ENCODE measurements at regions of chr3 and their contacts with region 1.

Region 1: DNA sequence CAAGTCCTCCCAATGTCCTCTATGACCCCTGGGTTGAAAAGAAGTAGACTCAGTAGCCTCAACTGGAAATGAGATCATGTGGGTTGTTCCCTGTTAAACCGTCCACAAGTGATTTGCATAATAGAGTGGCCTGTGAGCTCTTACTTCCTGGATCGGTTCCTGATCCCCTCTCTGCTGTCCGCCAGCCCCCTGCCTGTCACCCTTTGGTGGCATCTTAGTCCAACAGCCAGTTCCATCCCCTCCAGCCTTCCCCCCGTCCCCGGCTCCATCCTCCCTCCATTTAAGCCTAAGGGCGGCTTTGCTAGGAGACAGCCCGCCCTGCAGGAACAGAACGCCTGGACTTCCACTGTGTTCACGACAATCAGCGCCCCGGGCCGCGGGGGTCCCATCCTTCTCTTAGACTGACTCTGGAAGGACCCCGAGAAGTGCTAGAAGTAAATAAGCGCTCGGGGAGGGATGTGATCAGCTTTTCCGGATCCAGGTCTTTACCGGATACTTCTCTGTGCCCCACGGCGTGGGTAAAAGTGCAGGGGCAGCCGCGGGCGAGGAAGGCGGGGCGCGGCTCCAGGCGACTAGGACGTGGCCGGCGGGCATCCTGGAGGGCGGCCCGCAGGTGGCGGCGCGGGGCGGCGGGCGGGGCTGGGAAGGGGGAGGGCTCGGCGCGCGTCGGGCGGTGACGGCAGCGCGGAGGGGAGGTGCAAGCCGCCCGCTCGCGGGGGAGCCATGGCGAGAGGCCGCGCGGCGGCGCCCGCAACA is 51.2 kb upstream of the ULK4 start:
- DNase-seq: peak; percentile 75
- H3K4me3 Mint-ChIP-seq: peak overlapping the region; percentile 77
- H3K27ac Mint-ChIP-seq: peak overlapping the region; percentile 30
- H3K4me1 Mint-ChIP-seq: peaks cover 38% of the 10 kb centered on the region
- H3K27me3 Mint-ChIP-seq: no peaks in the 10 kb centered on the region
- CTCF ChIP-seq: no peak

Region 2: GRCh38 chr3:41893977-41894376 is 119.1 kb before region 1 on chr3:
- CTCF ChIA-PET with region 1: no interaction called
- intact Hi-C with region 1: loop called (anchors 10 kb)
- DNase-seq: peak; percentile 45
- H3K4me3 Mint-ChIP-seq: no peak overlapping the region
- H3K27ac Mint-ChIP-seq: no peak overlapping the region
- H3K4me1 Mint-ChIP-seq: no peaks in the 10 kb centered on the region
- H3K27me3 Mint-ChIP-seq: no peaks in the 10 kb centered on the region
- CTCF ChIP-seq: no peak

Region 3: DNA sequence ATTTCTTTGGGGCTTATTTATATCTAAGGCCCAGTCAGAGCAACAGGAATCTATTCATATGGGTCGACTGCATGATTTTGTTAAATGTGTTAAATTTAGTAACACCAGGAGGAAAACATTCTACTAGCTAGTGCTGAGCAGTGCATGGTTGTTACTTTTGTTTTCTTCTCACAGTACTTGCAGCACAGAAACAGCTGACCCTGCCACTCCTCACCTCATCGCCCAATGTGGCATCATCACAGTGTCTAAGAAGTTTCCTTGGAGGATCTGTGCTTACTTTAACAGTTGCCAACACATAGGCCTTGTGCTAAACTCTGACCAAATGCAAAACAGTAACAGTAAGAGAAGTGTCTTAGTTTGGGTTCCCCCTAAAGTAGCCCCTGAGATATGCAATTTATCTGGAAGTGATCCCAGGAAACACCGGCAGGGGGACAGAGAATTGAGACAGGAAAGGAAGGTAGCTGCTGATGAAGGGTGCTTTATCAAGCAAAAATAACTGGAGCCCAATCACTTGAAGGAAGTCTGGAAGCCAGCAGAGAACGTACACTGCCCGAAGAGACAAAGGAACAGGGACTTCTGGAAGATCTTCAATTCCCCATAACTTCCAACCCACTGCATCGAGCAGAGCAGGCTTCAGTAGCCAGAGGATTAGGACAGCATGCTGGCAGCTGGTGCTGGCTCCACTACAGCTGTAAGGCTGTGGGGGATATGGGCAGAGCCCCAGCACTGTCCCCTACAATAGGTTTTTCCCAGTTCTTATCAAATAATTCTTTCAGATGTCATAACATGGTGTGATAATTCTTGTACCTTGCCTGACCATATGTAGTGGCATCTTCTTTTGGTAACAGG is 15.2 kb before region 1 on chr3:
- CTCF ChIA-PET with region 1: no interaction called
- intact Hi-C with region 1: no loop called
- DNase-seq: peak; percentile 17
- H3K4me3 Mint-ChIP-seq: no peak overlapping the region
- H3K27ac Mint-ChIP-seq: no peak overlapping the region
- H3K4me1 Mint-ChIP-seq: no peaks in the 10 kb centered on the region
- H3K27me3 Mint-ChIP-seq: no peaks in the 10 kb centered on the region
- CTCF ChIP-seq: peak; percentile 19

Region 4: DNA sequence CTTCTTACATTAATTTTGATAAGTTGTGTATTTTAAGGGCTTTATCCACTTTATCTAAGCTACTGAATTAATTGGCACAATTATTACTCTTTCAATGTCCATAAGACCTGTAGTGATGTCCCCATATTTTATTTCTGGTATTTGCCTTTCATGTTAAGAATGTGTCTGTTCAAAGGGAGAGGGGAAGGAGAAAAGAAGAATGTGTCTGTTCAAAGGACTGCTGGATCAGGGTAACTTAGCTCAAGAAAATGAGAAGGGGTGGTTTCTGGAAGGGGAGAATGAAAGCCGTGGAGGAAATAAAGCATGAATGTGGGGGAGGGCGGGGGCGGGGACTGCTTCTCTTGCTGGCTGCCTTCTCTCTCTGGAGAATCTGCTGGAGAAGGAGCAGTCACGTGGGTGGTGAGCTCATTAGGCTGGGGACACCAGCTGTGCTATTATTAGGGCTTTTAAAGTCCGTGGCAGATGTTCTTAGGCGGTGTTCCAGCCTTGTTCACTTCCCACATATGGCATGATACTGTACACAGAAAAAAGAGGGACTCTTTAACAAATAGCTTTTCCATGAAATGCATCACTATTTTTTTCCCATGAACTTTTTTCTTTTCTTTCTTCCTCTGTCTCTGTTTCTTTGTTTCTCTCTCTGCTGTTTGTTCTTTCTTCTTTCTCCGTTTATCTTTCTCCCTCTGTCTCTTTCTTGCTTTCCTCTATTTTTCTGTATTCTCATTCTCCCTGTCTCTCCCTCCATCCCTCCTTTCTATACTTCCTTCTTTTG is 12.4 kb after region 1 on chr3:
- CTCF ChIA-PET with region 1: interaction called, 15 read pairs
- intact Hi-C with region 1: no loop called
- DNase-seq: peak; percentile 72
- H3K4me3 Mint-ChIP-seq: peak overlapping the region; percentile 63
- H3K27ac Mint-ChIP-seq: peak overlapping the region; percentile 72
- H3K4me1 Mint-ChIP-seq: peaks cover 42% of the 10 kb centered on the region
- H3K27me3 Mint-ChIP-seq: no peaks in the 10 kb centered on the region
- CTCF ChIP-seq: no peak

Region 5: GRCh38 chr3:42080452-42080891 is 67.4 kb after region 1 on chr3:
- CTCF ChIA-PET with region 1: no interaction called
- intact Hi-C with region 1: loop called (anchors 5 kb)
- DNase-seq: peak; percentile 64
- H3K4me3 Mint-ChIP-seq: peak overlapping the region; percentile 67
- H3K27ac Mint-ChIP-seq: peak overlapping the region; percentile 82
- H3K4me1 Mint-ChIP-seq: peaks cover 50% of the 10 kb centered on the region
- H3K27me3 Mint-ChIP-seq: no peaks in the 10 kb centered on the region
- CTCF ChIP-seq: no peak

Region 6: DNA sequence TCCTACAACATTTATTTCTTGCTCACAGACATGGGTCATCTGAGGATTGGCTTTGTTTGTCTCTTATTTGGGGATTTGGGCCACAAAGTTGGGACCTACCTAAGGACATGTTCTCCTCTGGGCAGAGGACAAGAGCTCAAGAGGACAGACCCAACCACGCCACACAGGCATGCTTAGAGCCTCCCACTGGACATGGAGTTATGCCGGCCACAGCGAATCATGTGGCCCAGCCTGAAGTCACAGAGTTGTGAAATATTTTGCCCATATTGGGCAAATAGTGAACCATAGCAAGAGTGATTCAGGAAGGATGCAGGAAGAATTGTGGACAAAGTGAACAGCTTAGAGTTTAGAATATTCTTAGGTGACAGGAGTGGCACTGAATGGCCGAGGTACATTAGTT is 87.9 kb after region 1 on chr3:
- CTCF ChIA-PET with region 1: no interaction called
- intact Hi-C with region 1: loop called (anchors 5 kb)
- DNase-seq: no peak
- H3K4me3 Mint-ChIP-seq: no peak overlapping the region
- H3K27ac Mint-ChIP-seq: no peak overlapping the region
- H3K4me1 Mint-ChIP-seq: peaks cover 33% of the 10 kb centered on the region
- H3K27me3 Mint-ChIP-seq: no peaks in the 10 kb centered on the region
- CTCF ChIP-seq: no peak